Mammary epithelial cell (primary cell): ENCODE measurements at regions of chr11 and their contacts with region 1.

Region 1: GRCh38 chr11:125376117-125376516 is 119.9 kb downstream of the FEZ1 start:
- DNase-seq: peak; percentile 39
- H3K4me3 ChIP-seq: no peak overlapping the region
- H3K27ac ChIP-seq: no peak overlapping the region
- H3K4me1 ChIP-seq: no peaks in the 10 kb centered on the region
- H3K27me3 ChIP-seq: peaks cover 9% of the 10 kb centered on the region
- CTCF ChIP-seq: no peak

Region 2: GRCh38 chr11:125287491-125288210 is 88.5 kb before region 1 on chr11:
- CTCF ChIA-PET with region 1: no interaction called
- dilution Hi-C with region 1: no loop called
- in situ Hi-C with region 1: no loop called
- intact Hi-C with region 1: no loop called
- DNase-seq: no peak
- H3K4me3 ChIP-seq: no peak overlapping the region
- H3K27ac ChIP-seq: no peak overlapping the region
- H3K4me1 ChIP-seq: no peaks in the 10 kb centered on the region
- H3K27me3 ChIP-seq: no peaks in the 10 kb centered on the region
- CTCF ChIP-seq: no peak

Region 3: DNA sequence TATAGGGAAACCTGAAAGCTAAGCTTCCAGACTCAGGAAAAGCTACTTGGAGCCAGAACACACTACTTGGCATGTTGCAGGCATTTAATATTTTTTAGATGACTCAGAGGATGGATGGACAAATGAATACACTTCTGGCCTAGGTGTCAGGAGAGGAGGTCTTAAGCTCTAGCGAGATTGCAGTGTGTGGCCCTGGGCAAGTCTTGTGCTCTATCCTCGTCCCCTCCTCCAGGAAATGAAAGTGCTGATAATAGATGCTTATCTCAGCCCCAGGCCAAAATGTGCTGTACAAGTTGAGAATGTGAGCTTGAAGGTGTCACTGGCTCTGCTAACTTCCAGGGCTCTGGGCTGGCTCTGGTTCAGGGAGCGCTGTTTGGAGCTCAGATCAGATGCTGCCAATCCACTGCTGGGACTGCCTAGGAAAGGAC is 75.3 kb before region 1 on chr11:
- CTCF ChIA-PET with region 1: no interaction called
- dilution Hi-C with region 1: loop called (anchors 5 kb)
- in situ Hi-C with region 1: no loop called
- intact Hi-C with region 1: no loop called
- DNase-seq: peak; percentile 82
- H3K4me3 ChIP-seq: no peak overlapping the region
- H3K27ac ChIP-seq: no peak overlapping the region
- H3K4me1 ChIP-seq: peaks cover 11% of the 10 kb centered on the region
- H3K27me3 ChIP-seq: no peaks in the 10 kb centered on the region
- CTCF ChIP-seq: no peak

Region 4: DNA sequence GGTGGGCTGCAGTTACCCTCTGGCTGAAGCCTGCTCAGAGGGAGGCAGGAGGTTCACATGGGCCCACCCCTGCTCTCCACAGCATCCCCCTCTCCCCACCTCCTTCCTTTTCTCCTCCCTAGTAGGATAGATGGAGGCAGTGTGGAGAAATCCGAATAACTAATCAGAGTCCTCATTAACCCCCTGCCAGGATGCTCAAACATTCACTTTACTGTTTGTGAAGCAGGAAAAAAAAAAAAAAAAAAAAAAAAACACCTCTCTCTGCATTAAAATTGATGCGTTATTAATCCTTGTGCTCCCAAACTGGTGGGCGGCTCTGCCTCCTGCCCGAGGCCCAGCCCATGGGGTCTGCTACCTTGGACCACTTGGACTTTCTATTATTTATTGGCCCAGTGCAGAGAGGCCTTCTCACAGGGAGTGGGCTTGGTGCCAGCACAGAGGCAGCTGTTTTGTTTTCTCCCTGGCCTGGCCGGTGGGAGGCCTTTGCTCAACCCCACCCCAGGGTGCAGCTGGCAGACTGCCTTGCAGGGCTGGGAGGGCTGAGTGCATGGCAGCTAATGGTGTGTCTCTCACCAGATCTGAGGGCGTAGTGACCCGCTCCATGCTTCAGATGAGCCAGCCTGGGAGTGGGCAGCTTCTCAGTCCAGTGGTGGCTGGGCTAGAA is 60.9 kb before region 1 on chr11:
- CTCF ChIA-PET with region 1: no interaction called
- dilution Hi-C with region 1: no loop called
- in situ Hi-C with region 1: no loop called
- intact Hi-C with region 1: no loop called
- DNase-seq: no peak
- H3K4me3 ChIP-seq: no peak overlapping the region
- H3K27ac ChIP-seq: no peak overlapping the region
- H3K4me1 ChIP-seq: no peaks in the 10 kb centered on the region
- H3K27me3 ChIP-seq: no peaks in the 10 kb centered on the region
- CTCF ChIP-seq: no peak

Region 5: DNA sequence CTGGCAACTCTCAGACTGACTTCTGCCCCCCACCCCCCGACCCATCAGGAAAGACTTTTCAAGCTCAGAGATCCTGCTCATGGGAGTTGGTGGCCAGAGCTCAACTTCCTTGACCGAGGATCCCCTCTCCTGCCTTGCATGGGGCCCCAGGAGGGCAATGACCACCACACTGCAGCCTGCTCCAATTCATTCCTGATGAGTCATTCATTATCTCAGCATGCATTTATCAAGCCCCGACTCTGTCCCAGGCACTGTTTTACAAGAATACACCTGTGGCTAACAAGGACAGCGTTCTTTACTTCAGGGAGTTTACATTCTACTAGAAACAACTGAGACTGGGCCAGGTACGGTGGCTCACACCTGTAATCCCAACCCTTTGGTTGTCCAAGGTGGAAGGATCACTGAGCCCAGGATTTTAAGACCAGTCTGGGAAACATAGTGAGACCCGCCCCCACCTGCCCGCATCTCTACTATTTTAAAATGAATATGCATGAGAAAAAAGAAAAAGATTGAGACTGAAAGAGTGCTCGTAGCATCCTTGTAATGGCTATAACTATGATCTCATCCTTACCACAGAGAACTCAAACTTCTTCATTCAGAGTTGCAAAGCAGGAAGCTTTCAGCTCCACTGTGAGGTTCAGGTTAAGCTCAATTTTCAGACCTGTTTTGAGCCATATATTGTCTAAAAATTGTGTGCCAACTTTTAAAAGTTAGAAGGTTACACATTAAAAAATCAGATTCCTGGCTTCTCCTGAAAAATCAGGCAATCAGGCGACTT is 59.5 kb after region 1 on chr11:
- CTCF ChIA-PET with region 1: interaction called, 3 read pairs
- dilution Hi-C with region 1: loop called (anchors 5 kb)
- in situ Hi-C with region 1: no loop called
- intact Hi-C with region 1: no loop called
- DNase-seq: no peak
- H3K4me3 ChIP-seq: no peak overlapping the region
- H3K27ac ChIP-seq: no peak overlapping the region
- H3K4me1 ChIP-seq: peaks cover 11% of the 10 kb centered on the region
- H3K27me3 ChIP-seq: no peaks in the 10 kb centered on the region
- CTCF ChIP-seq: no peak

Region 6: GRCh38 chr11:125464270-125464662 is 88.1 kb after region 1 on chr11:
- CTCF ChIA-PET with region 1: no interaction called
- dilution Hi-C with region 1: no loop called
- in situ Hi-C with region 1: no loop called
- intact Hi-C with region 1: no loop called
- DNase-seq: peak; percentile 27
- H3K4me3 ChIP-seq: no peak overlapping the region
- H3K27ac ChIP-seq: no peak overlapping the region
- H3K4me1 ChIP-seq: no peaks in the 10 kb centered on the region
- H3K27me3 ChIP-seq: no peaks in the 10 kb centered on the region
- CTCF ChIP-seq: no peak

Region 7: DNA sequence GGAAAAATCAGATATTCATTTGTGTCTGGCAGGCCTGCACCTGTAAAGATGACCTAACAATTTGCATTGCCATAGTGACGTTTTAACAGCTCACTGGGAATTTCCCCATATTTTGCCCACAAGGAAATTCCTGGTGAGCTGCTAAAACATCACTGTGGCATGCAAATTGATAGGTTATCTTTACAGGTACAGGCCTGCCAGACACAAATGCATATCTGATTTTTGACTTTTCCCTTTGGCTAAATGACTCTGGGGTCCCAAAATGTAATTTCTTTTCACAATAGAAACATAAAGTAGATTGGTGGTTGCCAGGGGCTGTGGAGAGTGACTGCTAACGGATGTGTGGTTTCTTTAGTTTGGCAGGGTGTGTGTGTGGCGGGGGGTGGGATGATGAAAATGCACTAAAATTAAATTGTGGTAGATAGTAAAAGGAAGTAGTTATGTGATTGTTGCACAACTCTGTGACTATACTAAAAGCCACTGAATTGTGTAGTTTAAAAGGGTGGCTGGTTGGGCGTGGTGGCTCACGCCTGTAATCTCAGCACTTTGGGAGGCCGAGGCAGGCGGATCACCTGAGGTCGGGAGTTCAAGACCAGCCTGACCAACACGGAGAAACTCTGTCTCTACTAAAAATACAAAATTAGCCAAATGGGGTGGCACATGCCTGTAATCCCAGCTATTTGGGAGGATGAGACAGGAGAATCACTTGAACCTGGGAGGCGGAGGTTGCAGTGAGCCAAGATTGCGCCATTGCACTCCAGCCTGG is 138.4 kb after region 1 on chr11:
- CTCF ChIA-PET with region 1: no interaction called
- dilution Hi-C with region 1: no loop called
- in situ Hi-C with region 1: no loop called
- intact Hi-C with region 1: no loop called
- DNase-seq: peak; percentile 98
- H3K4me3 ChIP-seq: no peak overlapping the region
- H3K27ac ChIP-seq: peak overlapping the region; percentile 88
- H3K4me1 ChIP-seq: peaks cover 15% of the 10 kb centered on the region
- H3K27me3 ChIP-seq: no peaks in the 10 kb centered on the region
- CTCF ChIP-seq: no peak